ENCODE measurements at regions of chr12 and their contacts with region 1.

Region 1: GRCh38 chr12:123141615-123142517 is 9.0 kb downstream of the PITPNM2 start:
- DNase-seq: peak; percentile 90

Region 2: DNA sequence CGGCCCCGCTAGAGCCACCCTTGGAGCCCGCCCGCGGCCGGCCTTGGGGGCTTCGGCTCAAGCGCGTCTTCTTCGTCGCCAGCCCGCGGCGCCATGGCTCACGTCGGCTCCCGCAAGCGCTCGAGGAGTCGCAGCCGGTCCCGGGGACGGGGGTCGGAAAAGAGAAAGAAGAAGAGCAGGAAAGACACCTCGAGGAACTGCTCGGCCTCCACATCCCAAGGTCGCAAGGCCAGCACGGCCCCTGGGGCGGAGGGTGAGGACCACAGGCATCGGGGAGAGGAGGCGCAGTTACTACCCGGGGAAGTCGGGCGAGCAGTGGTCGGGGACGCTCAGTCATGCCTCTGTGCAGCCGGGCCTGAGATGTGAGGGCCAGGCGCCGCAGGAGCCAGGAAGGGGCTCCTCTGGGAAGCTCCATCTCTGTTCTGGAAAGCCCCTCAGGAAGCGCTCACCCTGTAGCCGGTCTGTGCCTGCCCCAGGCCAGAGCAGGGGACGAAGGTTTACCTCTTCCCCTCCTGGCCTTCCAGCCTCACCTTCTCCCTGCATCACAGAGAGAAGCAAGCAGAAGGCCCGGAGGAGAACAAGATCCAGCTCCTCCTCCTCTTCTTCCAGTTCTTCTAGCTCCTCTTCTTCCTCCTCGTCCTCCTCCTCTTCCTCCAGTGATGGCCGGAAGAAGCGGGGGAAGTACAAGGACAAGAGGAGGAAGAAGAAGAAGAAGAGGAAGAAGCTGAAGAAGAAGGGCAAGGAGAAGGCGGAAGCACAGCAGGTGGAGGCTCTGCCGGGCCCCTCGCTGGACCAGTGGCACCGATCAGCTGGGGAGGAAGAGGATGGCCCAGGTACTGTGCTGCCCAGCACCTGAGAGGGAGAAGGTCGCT is 160.6 kb before region 1 on chr12:
- intact Hi-C with region 1: no loop called
- DNase-seq: no peak

Region 3: GRCh38 chr12:122995503-122996187 is 146.2 kb before region 1 on chr12:
- intact Hi-C with region 1: loop called in 1 of 2 experiments (anchors 10 kb)
- DNase-seq: peak; percentile 84

Region 4: GRCh38 chr12:123043536-123044001 is 98.3 kb before region 1 on chr12:
- intact Hi-C with region 1: loop called in 1 of 2 experiments (anchors 10 kb)
- DNase-seq: peak; percentile 93

Region 5: GRCh38 chr12:123223241-123223668 is 81.4 kb after region 1 on chr12:
- intact Hi-C with region 1: loop called in 1 of 2 experiments (anchors 10 kb)
- DNase-seq: no peak